ENCODE measurements at regions of chr10 and their contacts with region 1.

Region 1: GRCh38 chr10:95430231-95430951 is 130.8 kb downstream of the SORBS1 start:
- DNase-seq: peak in 1 of 2 donors; percentile 74
- ATAC-seq: peak; percentile 83 to 95 (median 84)
- H3K4me3 ChIP-seq: no peak overlapping the region
- H3K4me3 Mint-ChIP-seq: no peak overlapping the region
- H3K27ac ChIP-seq: no peak overlapping the region
- H3K27ac Mint-ChIP-seq: no peak overlapping the region
- H3K4me1 ChIP-seq: no peaks in the 10 kb centered on the region
- H3K4me1 Mint-ChIP-seq: no peaks in the 10 kb centered on the region
- H3K27me3 ChIP-seq: no peaks in the 10 kb centered on the region
- H3K27me3 Mint-ChIP-seq: peaks cover 0 to 5% of the 10 kb centered on the region in 2 donors
- CTCF ChIP-seq: peak; percentile 98

Region 2: GRCh38 chr10:95374597-95375209 is 55.7 kb before region 1 on chr10:
- intact Hi-C with region 1: no loop called
- DNase-seq: peak in 1 of 2 donors; percentile 66
- ATAC-seq: peak; percentile 47 to 73 (median 69)
- H3K4me3 ChIP-seq: no peak overlapping the region
- H3K4me3 Mint-ChIP-seq: no peak overlapping the region
- H3K27ac ChIP-seq: no peak overlapping the region
- H3K27ac Mint-ChIP-seq: no peak overlapping the region
- H3K4me1 ChIP-seq: no peaks in the 10 kb centered on the region
- H3K4me1 Mint-ChIP-seq: no peaks in the 10 kb centered on the region
- H3K27me3 ChIP-seq: no peaks in the 10 kb centered on the region
- H3K27me3 Mint-ChIP-seq: peaks cover 8 to 17% of the 10 kb centered on the region in 2 donors
- CTCF ChIP-seq: peak; percentile 35

Region 3: GRCh38 chr10:95601116-95601719 is 170.8 kb after region 1 on chr10:
- intact Hi-C with region 1: loop called (anchors 1 kb)
- DNase-seq: peak; percentile 23 to 70
- ATAC-seq: peak in 2 of 3 donors; percentile 54 to 67
- H3K4me3 ChIP-seq: no peak overlapping the region
- H3K4me3 Mint-ChIP-seq: no peak overlapping the region
- H3K27ac ChIP-seq: no peak overlapping the region
- H3K27ac Mint-ChIP-seq: no peak overlapping the region
- H3K4me1 ChIP-seq: no peaks in the 10 kb centered on the region
- H3K4me1 Mint-ChIP-seq: no peaks in the 10 kb centered on the region
- H3K27me3 ChIP-seq: no peaks in the 10 kb centered on the region
- H3K27me3 Mint-ChIP-seq: peaks cover 7 to 9% of the 10 kb centered on the region in 2 donors
- CTCF ChIP-seq: peak; percentile 67

Region 4: DNA sequence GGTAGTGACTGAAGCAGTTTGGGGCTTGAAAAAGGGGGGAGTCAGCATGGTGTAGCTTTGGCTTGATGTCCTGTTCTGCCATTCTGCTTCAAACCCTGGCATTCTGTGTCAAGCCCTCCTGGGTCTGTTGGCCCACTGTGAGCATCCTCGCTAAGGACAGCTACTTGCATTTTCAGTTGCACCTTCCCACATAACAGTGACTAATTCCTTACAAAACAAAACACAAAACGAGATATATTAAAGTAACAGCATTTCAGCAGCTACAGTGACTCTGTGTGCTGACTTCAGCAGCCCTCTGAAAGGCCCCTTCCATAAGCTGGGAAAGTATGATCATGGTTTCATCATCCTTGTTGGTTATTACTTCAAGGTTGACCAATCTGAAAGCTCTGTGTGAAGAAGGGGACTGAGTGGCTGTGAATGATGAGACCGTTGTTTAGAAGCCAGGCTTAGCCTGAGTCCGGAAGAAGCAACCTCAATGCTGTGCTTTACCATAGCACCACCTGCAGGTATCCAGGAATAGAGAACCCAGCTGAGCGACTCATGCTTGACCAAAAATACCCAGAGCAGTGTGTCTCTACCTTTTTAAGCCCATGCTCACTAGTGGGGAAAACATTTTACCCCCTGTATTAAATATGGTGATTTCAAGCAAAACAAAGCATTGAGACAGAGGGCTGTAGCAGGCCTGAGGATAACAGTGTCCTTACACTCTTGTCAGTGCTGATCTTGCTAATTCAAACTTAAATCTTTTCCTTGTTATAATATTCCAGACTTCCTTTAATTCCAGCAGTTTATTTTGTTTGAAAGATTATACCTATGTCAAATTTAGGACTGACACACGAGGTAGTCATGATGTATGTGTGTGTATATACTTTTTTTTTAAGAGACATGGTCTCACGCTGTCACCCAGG is 434.8 kb after region 1 on chr10:
- intact Hi-C with region 1: loop called (anchors 5 kb)
- DNase-seq: peak; percentile 27 to 74
- ATAC-seq: peak; percentile 89 to 98 (median 97)
- H3K4me3 ChIP-seq: no peak overlapping the region
- H3K4me3 Mint-ChIP-seq: no peak overlapping the region
- H3K27ac ChIP-seq: no peak overlapping the region
- H3K27ac Mint-ChIP-seq: peak overlapping the region in 1 of 2 donors; percentile 78
- H3K4me1 ChIP-seq: peaks cover 6% of the 10 kb centered on the region
- H3K4me1 Mint-ChIP-seq: peaks cover 6 to 7% of the 10 kb centered on the region in 2 donors
- H3K27me3 ChIP-seq: no peaks in the 10 kb centered on the region
- H3K27me3 Mint-ChIP-seq: no peaks in the 10 kb centered on the region
- CTCF ChIP-seq: peak; percentile 65